Body of pancreas (tissue), 4 donors: ENCODE measurements at regions of chr19 and their contacts with region 1.

Region 1: DNA sequence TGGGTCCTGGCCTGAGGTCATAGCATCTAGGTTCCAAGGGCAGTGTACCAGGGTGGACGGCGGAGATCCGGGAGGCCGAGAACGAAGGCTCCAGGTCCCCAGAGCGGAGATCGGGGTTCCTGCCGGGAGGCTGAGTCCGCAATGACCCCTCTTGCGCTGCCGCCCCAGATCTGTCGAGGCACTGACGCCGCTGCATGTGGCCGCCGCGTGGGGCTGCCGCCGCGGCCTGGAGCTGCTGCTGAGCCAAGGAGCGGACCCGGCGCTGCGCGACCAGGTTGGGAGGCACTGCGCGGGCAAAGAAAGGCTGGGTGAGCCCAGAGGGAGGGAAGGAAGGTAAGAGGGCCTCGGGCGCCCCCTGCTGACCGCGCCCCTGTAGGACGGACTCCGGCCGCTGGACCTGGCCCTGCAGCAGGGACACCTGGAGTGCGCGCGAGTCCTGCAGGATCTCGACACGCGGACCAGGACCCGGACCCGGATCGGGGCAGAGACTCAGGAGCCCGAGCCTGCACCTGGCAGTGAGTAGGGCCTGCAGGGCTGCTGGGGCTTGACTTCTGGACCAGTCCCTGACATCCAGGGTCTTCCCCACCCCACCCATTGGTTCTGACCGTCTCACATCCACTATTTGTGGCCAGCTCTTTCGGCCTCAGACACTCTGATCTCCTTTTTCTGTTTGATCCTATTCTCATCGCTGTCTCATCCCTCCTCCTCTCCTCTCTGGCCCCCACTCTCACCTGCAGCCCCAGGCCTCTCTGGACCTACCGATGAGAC is 971 bp downstream of the ANKLE1 start:
- DNase-seq: peak; percentile 89 to 93 (median 90)
- ATAC-seq: peak; percentile 99
- H3K4me3 ChIP-seq: no peak overlapping the region
- H3K27ac ChIP-seq: no peak overlapping the region
- H3K4me1 ChIP-seq: peaks cover 17% of the 10 kb centered on the region
- H3K27me3 ChIP-seq: peaks cover 0 to 10% of the 10 kb centered on the region in 2 donors
- CTCF ChIP-seq: peak; percentile 92 to 96 (median 94)
- POLR2A ChIP-seq: no peak

Region 2: GRCh38 chr19:17069218-17069617 is 213.5 kb before region 1 on chr19:
- intact Hi-C with region 1: loop called (anchors 5 kb)
- DNase-seq: no peak
- ATAC-seq: no peak
- H3K4me3 ChIP-seq: no peak overlapping the region
- H3K27ac ChIP-seq: no peak overlapping the region
- H3K4me1 ChIP-seq: peaks cover 3% of the 10 kb centered on the region
- H3K27me3 ChIP-seq: no peaks in the 10 kb centered on the region
- CTCF ChIP-seq: no peak
- POLR2A ChIP-seq: no peak

Region 3: DNA sequence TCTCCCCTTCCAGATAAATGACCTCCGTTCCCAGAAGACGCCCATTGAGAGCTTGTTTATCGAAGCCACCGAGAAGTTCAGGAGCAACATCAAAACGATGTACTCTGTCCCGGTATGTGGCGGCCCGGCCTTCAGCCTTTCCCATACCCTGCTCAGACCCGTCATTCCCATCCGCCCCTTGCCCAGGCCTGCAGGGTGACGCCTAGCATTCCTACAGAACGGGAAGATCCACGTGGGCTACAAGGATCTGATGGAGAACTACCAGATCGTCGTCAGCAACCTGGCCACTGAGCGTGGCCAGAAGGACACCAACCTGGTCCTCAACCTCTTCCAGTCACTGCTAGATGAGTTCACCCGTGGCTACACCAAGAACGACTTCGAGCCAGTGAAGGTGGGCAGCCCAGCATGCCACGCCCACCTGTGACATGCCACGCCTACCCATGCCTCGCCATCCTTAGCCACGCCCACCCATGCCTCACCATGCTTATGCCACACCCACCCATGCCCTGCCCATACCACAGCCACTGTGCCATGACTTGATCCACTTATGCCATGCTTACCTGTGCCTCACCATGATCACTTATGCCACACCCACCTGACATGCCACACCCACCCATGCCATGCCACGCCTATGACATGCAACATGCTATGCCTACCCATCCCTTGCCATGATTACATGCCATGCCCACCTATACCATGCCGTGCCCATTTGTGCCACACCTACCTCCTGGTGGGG is 80.6 kb before region 1 on chr19:
- intact Hi-C with region 1: loop called (anchors 5 kb)
- DNase-seq: no peak
- ATAC-seq: no peak
- H3K4me3 ChIP-seq: no peak overlapping the region
- H3K27ac ChIP-seq: no peak overlapping the region
- H3K4me1 ChIP-seq: no peaks in the 10 kb centered on the region
- H3K27me3 ChIP-seq: no peaks in the 10 kb centered on the region
- CTCF ChIP-seq: no peak
- POLR2A ChIP-seq: no peak